Posterior vena cava (tissue), 2 donors: ENCODE measurements at regions of chr17 and their contacts with region 1.

Region 1: GRCh38 chr17:1123921-1124715 is 55.7 kb downstream of the ABR start:
- DNase-seq: no peak

Region 2: GRCh38 chr17:969811-970355 is 154.2 kb before region 1 on chr17:
- intact Hi-C with region 1: no loop called
- DNase-seq: no peak

Region 3: DNA sequence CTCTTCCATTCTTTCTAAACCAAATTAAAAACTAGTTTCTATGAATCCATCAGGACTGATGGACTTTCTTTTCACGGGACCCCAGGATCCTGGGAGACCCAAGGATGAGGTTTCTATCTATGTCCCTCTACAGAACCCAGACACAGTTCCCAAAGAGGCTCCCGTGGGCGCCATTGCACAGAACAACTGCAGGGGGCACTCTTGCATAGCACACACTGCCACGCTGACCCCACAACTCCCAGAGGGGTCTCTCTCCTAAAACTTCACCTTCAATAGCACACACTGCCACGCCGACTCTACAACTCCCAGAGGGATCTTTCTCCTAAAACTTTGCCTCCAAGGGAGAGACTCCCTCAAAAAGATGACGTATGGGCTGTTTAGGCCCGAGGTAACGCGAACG is 46.6 kb after region 1 on chr17:
- intact Hi-C with region 1: loop called in 1 of 2 experiments (anchors 5 kb)
- DNase-seq: no peak

Region 4: GRCh38 chr17:1186923-1187771 is 63.0 kb after region 1 on chr17:
- intact Hi-C with region 1: loop called (anchors 1 to 2 kb)
- DNase-seq: peak; percentile 96